Colonic mucosa (tissue), 4 donors: ENCODE measurements at regions of chr13 and their contacts with region 1.

Region 1: GRCh38 chr13:97359181-97360057 is 74.5 kb upstream of the RAP2A start:
- DNase-seq: peak; percentile 65
- H3K4me3 ChIP-seq: no peak overlapping the region
- H3K27ac ChIP-seq: no peak overlapping the region
- H3K4me1 ChIP-seq: no peaks in the 10 kb centered on the region
- H3K27me3 ChIP-seq: no peaks in the 10 kb centered on the region
- CTCF ChIP-seq: peak; percentile 71

Region 2: GRCh38 chr13:97021241-97021640 is 338.2 kb before region 1 on chr13:
- intact Hi-C with region 1: loop called (anchors 5 kb)
- DNase-seq: no peak
- H3K4me3 ChIP-seq: no peak overlapping the region
- H3K27ac ChIP-seq: no peak overlapping the region
- H3K4me1 ChIP-seq: no peaks in the 10 kb centered on the region
- H3K27me3 ChIP-seq: no peaks in the 10 kb centered on the region
- CTCF ChIP-seq: no peak

Region 3: DNA sequence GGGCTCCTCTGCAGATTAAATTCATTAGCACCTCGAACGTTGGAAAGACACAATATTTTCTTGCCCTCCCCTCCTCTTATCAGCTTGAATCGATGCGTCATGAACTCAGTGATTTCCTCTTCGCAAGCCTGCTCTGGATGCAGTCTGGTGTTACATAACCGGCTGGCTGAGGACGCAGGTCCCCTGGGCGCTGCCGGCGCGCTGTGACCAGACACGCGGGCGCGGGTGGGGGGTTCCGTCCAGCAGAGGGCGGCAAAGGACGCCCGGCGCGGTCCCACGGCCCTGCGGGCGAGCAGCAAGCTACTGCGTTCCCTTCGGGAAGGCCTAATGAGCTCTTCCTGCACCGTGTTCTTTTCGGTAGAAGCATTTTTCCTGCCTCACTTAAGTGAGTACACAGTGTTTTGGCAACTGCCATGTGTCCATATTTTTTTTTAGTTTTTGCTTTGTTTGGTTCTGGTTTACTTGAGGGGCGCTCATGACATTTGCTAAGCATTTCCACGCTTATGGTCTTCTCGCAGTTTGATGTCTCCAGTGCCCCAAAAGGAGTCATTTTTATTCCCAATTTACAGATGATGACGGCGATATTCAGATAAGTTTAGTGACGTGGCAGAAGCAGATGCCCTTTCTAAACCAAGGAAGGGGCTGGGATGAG is 249.5 kb before region 1 on chr13:
- intact Hi-C with region 1: loop called (anchors 5 kb)
- DNase-seq: peak; percentile 89
- H3K4me3 ChIP-seq: no peak overlapping the region
- H3K27ac ChIP-seq: no peak overlapping the region
- H3K4me1 ChIP-seq: no peaks in the 10 kb centered on the region
- H3K27me3 ChIP-seq: no peaks in the 10 kb centered on the region
- CTCF ChIP-seq: peak; percentile 95

Region 4: DNA sequence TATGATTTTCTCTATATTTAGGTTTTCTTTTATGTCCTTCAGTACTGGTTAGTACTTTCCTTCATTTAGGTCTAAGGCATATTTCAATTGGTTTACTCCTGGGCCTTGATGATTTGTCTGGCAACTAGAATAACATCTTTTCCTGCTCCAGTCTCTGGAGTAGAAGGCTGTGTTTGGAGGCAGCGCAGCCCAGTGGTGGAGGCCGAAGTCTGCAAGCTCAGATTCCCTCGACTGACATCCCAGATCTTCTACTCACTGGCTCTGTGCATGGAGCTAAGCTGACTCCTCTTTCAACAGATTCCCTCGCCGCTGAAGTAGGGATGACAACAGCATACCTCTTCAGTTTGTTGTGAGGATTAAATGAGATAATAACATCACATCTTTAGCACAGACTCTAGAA is 215.5 kb after region 1 on chr13:
- intact Hi-C with region 1: loop called (anchors 10 kb)
- DNase-seq: peak; percentile 41
- H3K4me3 ChIP-seq: no peak overlapping the region
- H3K27ac ChIP-seq: no peak overlapping the region
- H3K4me1 ChIP-seq: no peaks in the 10 kb centered on the region
- H3K27me3 ChIP-seq: no peaks in the 10 kb centered on the region
- CTCF ChIP-seq: peak; percentile 19